Naive thymus-derived CD4-positive, alpha-beta T cell (primary cell): ENCODE measurements at regions of chr4 and their contacts with region 1.

Region 1: GRCh38 chr4:52028969-52029368 is 8.8 kb upstream of the LRRC66 start:
- DNase-seq: no peak
- ATAC-seq: no peak
- H3K4me3 ChIP-seq: no peak overlapping the region
- H3K4me3 Mint-ChIP-seq: no peak overlapping the region
- H3K27ac ChIP-seq: no peak overlapping the region
- H3K27ac Mint-ChIP-seq: no peak overlapping the region
- H3K4me1 ChIP-seq: no peaks in the 10 kb centered on the region
- H3K4me1 Mint-ChIP-seq: peaks cover 0 to 5% (median 0%) of the 10 kb centered on the region in 7 donors
- H3K27me3 ChIP-seq: no peaks in the 10 kb centered on the region
- H3K27me3 Mint-ChIP-seq: no peaks in the 10 kb centered on the region

Region 2: DNA sequence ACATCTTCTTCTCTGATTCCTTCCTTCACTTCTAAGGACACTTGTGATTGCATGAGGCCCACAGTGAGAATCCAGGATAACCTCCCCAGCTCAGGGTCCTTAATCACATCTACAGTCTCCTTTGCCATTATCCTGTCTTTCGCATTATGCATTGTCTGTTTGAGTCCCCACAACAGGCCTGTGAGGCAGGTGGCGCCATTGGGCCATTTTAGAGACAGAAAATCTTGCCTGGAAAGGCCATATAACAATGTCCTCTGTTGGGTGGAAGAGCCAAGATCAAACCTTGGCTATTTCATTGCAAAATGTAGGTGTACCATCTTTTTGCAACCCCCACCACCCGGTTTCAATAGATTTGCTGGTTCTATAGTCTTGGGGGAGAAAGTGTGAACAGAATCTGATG is 197.8 kb before region 1 on chr4:
- CTCF ChIA-PET with region 1: interaction called, 9 read pairs
- POLR2A ChIA-PET with region 1: no interaction called
- intact Hi-C with region 1: loop called (anchors 1 kb)
- DNase-seq: peak; percentile 39 to 70 (median 58)
- ATAC-seq: peak; percentile 77
- H3K4me3 ChIP-seq: no peak overlapping the region
- H3K4me3 Mint-ChIP-seq: no peak overlapping the region
- H3K27ac ChIP-seq: no peak overlapping the region
- H3K27ac Mint-ChIP-seq: no peak overlapping the region
- H3K4me1 ChIP-seq: no peaks in the 10 kb centered on the region
- H3K4me1 Mint-ChIP-seq: no peaks in the 10 kb centered on the region
- H3K27me3 ChIP-seq: no peaks in the 10 kb centered on the region
- H3K27me3 Mint-ChIP-seq: peaks cover 0 to 15% (median 7%) of the 10 kb centered on the region in 5 donors

Region 3: DNA sequence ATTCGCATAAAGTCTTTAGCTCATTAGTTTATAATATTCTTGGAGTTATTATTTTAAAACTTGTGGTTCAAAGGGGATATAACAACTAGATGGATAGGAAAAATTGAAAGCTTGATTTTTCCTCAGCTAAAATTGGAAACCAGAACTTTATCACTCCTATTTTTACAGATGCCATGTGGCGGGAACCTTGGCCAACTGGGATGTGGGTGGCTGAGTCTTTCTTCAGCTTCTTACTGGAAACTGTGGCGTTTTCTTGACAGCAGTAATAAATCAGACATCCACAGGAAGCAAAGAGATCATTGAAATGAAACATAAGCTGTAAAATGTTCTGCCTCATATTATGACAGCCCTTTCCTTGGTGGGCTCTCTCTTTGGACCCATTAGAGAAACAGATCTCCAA is 106.2 kb after region 1 on chr4:
- CTCF ChIA-PET with region 1: no interaction called
- POLR2A ChIA-PET with region 1: no interaction called
- intact Hi-C with region 1: no loop called
- DNase-seq: no peak
- ATAC-seq: no peak
- H3K4me3 ChIP-seq: no peak overlapping the region
- H3K4me3 Mint-ChIP-seq: no peak overlapping the region
- H3K27ac ChIP-seq: no peak overlapping the region
- H3K27ac Mint-ChIP-seq: no peak overlapping the region
- H3K4me1 ChIP-seq: no peaks in the 10 kb centered on the region
- H3K4me1 Mint-ChIP-seq: no peaks in the 10 kb centered on the region
- H3K27me3 ChIP-seq: no peaks in the 10 kb centered on the region
- H3K27me3 Mint-ChIP-seq: peaks cover 0 to 21% (median 4%) of the 10 kb centered on the region in 5 donors